ENCODE measurements at regions of chr3 and their contacts with region 1.

Region 1: GRCh38 chr3:131026321-131027178 is at the starts of genes ASTE1 and NEK11:
- DNase-seq: peak; percentile 82 to 93 (median 90)
- H3K4me3 ChIP-seq: peak within 1 kb of the TSS; percentile 65 to 97 (median 85)
- H3K27ac ChIP-seq: peak within 1 kb of the TSS; percentile 48 to 96 (median 85)
- H3K27me3 ChIP-seq: no peaks in the 10 kb centered on the region
- CTCF ChIP-seq: peak in 27 of 56 donors; percentile 6 to 51 (median 28)
- total RNA-seq, gene ASTE1: 3.8 to 19.0 (median 8.2) TPM
- total RNA-seq, gene NEK11: 16.6 to 35.3 (median 22.2) TPM

Region 2: GRCh38 chr3:130746246-130747039 is 280.1 kb before region 1 on chr3 and contains the start of gene PIK3R4:
- intact Hi-C with region 1: loop called (anchors 10 kb)
- DNase-seq: peak; percentile 94 to 98 (median 96)
- H3K4me3 ChIP-seq: peak within 1 kb of the TSS; percentile 65 to 100 (median 93)
- H3K27ac ChIP-seq: peak within 1 kb of the TSS in 56 of 59 donors; percentile 5 to 94 (median 80)
- H3K27me3 ChIP-seq: no peaks in the 10 kb centered on the region
- CTCF ChIP-seq: peak in 9 of 56 donors; percentile 10 to 29 (median 20)
- total RNA-seq, gene PIK3R4: 25.7 to 54.3 (median 38.9) TPM

Region 3: DNA sequence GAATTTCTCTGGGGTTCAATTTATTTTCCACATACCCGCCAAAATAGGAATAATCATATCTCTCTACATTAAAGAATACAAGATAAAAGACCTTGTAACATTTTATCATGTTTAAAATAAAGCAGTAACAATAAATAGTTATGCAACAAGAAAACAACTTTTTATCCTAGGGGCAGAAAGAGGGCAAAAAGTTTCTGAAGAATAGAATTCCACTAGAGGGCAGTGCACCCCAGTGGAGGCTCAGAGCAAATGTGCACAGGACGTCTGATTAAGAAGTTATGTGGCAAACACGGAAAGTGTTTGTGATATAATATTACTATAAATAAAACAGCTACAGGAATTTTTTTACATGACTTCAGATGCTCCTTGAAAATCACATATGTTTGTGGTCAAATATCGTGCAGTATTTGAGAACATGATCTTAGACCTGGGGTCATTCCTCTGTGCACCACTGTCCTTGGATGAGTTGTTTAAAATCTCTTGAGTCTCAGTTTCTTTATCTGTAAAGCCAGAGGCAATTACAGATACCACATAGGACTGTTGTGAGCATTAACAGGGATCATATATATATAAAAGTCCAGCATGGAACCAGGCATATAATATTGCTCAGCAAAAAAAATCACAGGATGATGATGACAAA is 266.7 kb before region 1 on chr3:
- intact Hi-C with region 1: loop called in 1 of 2 experiments (anchors 10 kb)
- DNase-seq: peak in 3 of 10 donors; percentile 25 to 53 (median 52)
- H3K4me3 ChIP-seq: peak overlapping the region in 4 of 59 donors; percentile 3 to 10 (median 6)
- H3K27ac ChIP-seq: no peak overlapping the region
- H3K27me3 ChIP-seq: no peaks in the 10 kb centered on the region
- CTCF ChIP-seq: peak; percentile 70 to 91 (median 82)

Region 4: DNA sequence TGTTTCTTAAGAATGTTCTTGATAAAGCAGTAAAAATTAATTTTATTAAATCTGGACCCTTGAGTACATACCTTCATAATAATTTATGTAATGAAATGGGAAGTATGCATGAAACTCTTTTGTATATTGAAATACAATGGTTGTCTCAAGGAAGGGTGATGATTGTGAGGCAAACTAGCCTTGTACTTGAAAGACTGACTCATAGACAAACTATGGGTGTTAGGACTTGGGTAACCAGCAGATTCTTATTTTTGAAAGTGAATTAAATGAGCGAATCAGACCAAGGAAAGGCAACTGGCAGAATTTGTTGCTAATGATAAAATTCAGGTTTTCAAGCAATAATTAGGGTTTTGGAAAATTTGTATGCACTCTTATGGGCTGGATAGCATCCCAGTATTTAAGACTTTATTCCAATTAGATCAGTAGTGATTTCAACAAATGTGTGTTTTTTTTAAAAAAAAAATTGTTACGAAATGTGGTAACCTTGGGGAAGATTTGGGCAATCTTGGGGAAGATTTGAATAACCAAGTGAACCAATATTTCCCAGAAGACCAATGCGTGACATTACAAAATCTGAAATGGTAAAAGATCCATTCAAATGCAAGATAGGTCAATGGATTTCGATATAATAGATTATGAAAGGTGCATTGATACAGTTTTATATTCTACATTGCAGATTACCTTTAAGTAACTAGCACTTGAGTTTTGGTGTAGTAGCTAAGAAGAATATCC is 90.6 kb before region 1 on chr3:
- intact Hi-C with region 1: no loop called
- DNase-seq: no peak
- H3K4me3 ChIP-seq: no peak overlapping the region
- H3K27ac ChIP-seq: no peak overlapping the region
- H3K27me3 ChIP-seq: no peaks in the 10 kb centered on the region
- CTCF ChIP-seq: no peak

Region 5: GRCh38 chr3:131502530-131503245 is 476.1 kb after region 1 on chr3 and contains the start of gene MRPL3:
- intact Hi-C with region 1: no loop called
- DNase-seq: peak; percentile 74 to 91 (median 86)
- H3K4me3 ChIP-seq: peak within 1 kb of the TSS; percentile 47 to 100 (median 91)
- H3K27ac ChIP-seq: peak within 1 kb of the TSS in 51 of 59 donors; percentile 0 to 85 (median 64)
- H3K27me3 ChIP-seq: peaks cover 0 to 8% (median 0%) of the 10 kb centered on the region in 45 donors
- CTCF ChIP-seq: peak in 35 of 56 donors; percentile 3 to 60 (median 29)
- total RNA-seq, gene MRPL3: 24.9 to 63.5 (median 46.5) TPM